Heart left ventricle (tissue), 16 donors: ENCODE measurements at regions of chr17 and their contacts with region 1.

Region 1: DNA sequence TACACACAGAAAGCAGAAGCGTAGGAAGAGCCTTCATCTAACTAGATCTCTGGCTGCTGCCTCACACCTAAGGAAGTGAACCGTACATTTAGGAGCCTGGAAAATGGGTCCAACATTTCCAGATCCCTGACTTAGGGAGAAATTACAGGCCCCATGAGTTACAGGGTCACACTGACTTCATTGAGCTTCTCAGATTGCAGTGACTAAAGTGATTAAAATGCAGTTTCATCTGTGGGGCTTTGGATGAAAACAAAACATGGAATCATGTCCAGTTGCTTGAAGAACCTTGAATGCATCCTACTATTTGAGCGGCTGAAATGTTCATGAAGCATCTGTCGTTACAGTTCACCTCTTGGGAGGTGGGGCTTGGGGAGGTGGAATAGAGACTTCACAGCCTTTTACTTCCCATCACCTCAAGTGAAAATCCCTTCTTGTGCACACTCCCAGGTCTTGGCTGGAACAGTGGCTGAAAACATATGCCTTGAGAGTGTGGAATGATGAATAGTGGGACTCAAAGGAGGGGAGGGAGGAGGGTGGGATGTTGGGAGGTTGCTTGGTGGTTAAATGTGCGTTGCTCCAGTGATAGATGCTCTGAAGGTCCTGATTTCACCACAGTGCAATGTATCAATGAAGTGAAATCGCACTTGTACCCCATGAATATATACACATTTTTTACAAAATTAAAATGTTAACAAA is 19.7 kb downstream of the TEKT3 start:
- DNase-seq: no peak
- ATAC-seq: no peak
- H3K4me3 ChIP-seq: no peak overlapping the region
- H3K27ac ChIP-seq: no peak overlapping the region
- H3K4me1 ChIP-seq: peaks cover 0 to 5% (median 0%) of the 10 kb centered on the region in 12 donors
- H3K27me3 ChIP-seq: no peaks in the 10 kb centered on the region
- CTCF ChIP-seq: no peak
- POLR2A ChIP-seq: no peak

Region 2: GRCh38 chr17:15262291-15263205 is 59.2 kb before region 1 on chr17:
- intact Hi-C with region 1: loop called in 1 of 10 experiments (anchors 5 kb)
- DNase-seq: peak; percentile 90 to 96 (median 93)
- ATAC-seq: peak; percentile 82 to 89 (median 86)
- H3K4me3 ChIP-seq: peak overlapping the region; percentile 50 to 92 (median 78)
- H3K27ac ChIP-seq: peak overlapping the region; percentile 94 to 99 (median 97)
- H3K4me1 ChIP-seq: peaks cover 2 to 62% (median 32%) of the 10 kb centered on the region in 12 donors
- H3K27me3 ChIP-seq: peaks cover 0 to 30% (median 0%) of the 10 kb centered on the region in 9 donors
- CTCF ChIP-seq: peak in 10 of 12 donors; percentile 14 to 60 (median 32)
- POLR2A ChIP-seq: peak; percentile 36 to 92